Pancreas (tissue), 10 donors: ENCODE measurements at regions of chr3 and their contacts with region 1.

Region 1: DNA sequence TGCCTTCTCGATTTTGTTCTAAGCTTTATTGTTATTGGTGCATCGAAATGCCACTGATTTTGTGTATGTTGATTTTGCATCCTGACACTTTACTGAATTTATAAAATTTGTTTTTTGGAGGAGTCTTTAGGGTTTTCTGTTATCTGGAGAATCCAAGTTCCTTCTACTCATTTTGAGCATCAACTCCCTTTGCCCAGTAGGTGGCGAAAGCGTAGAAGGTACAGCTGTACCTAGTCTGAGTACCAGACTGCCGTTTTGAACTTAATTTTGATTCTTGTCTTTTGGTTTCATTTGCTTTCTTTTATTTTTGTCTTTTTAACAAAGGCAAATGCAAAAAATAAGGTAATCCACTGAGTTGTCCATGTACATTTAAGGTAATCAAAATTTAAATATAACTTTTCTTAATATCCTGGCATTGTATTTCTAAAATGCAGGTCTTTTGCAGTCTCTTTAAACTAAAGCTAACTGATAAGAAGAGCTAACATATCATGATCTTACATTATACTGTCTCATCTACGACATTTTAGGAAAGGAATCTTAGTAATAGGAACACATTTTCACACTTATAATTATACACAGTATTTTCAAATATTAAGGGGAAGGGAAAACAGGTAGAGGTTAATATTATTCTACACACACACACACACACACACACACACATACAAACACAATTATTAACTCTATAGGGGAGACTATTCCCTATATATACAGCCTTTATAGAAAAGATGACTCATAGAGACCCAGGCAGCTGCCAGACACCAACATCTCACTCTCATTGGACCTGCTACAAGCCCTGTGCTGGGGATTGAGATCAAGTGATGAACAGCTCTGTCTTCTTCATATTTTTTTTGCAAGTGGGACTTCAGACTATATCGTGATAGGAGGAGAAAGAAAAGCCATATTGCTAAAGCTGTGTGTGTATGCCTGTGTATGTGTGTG is 71.7 kb downstream of the SYNPR start:
- DNase-seq: peak in 4 of 6 donors; percentile 41 to 59 (median 49)
- ATAC-seq: peak; percentile 70 to 90 (median 84)
- H3K4me3 ChIP-seq: no peak overlapping the region
- H3K27ac ChIP-seq: no peak overlapping the region
- H3K4me1 ChIP-seq: no peaks in the 10 kb centered on the region
- H3K27me3 ChIP-seq: no peaks in the 10 kb centered on the region
- CTCF ChIP-seq: peak; percentile 42 to 70 (median 55)

Region 2: GRCh38 chr3:63092520-63092919 is 257.3 kb before region 1 on chr3:
- intact Hi-C with region 1: no loop called
- DNase-seq: no peak
- ATAC-seq: no peak
- H3K4me3 ChIP-seq: no peak overlapping the region
- H3K27ac ChIP-seq: no peak overlapping the region
- H3K4me1 ChIP-seq: no peaks in the 10 kb centered on the region
- H3K27me3 ChIP-seq: no peaks in the 10 kb centered on the region
- CTCF ChIP-seq: no peak

Region 3: DNA sequence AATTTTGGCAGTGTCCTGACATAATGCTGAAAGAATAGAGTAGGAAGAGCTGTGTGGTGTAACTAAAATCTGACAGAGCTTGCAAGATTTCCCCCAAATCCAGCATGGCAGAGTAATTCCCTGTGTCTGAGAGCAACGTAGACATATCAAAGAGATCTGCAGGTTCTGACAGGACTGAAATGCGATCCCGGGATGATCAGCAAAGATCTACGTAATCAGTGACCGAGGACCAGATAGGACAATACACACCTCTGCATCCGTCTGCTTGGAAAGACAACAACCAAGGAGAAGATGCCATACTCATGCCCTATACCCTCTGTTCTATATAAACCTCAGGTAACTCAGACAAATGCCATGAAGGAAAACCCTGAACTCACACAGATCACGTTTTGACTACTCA is 98.4 kb before region 1 on chr3:
- intact Hi-C with region 1: no loop called
- DNase-seq: no peak
- ATAC-seq: no peak
- H3K4me3 ChIP-seq: no peak overlapping the region
- H3K27ac ChIP-seq: no peak overlapping the region
- H3K4me1 ChIP-seq: no peaks in the 10 kb centered on the region
- H3K27me3 ChIP-seq: no peaks in the 10 kb centered on the region
- CTCF ChIP-seq: no peak

Region 4: DNA sequence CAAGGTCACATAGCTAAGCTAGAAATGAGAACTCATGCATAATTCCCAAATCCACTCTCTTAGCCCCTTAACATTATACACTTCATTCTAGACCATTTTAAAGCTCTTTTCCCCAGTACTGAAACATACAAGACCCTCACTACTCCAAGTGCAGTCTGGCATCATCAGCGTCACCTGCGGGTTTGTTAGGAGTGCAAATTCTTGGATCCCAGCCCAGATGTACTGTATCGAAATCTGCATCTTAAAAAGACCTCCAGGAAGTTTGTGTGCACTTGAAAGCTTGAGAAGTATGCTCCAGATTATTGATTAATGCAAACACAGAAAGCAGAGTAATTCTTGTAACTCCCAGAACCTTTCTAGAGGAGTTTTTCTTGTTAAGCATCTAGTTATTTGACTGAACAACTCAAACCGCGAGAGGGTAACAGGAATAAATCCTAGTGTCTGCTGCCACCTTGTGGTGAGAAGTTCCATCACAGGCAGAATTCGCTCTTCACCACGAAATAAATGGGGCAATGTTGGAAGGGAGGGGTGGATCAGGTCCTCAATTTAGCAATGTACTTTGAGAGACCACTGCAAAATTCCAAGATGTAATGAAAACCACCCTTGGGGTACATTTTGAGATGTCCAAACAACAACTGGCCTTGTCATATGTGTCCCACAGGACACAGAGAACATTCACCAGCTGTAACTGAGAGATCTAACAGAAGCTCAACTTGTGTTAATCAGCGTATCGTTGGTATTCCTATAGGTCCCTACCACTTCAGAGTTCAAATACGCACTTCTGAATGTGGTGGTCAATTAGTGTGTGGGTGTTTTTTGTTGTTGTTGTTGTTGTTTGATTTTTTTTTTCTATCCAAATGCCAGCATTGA is 468.7 kb after region 1 on chr3:
- intact Hi-C with region 1: loop called in 1 of 3 experiments (anchors 10 kb)
- DNase-seq: peak in 5 of 6 donors; percentile 21 to 74 (median 39)
- ATAC-seq: peak; percentile 63 to 92 (median 86)
- H3K4me3 ChIP-seq: no peak overlapping the region
- H3K27ac ChIP-seq: no peak overlapping the region
- H3K4me1 ChIP-seq: no peaks in the 10 kb centered on the region
- H3K27me3 ChIP-seq: no peaks in the 10 kb centered on the region
- CTCF ChIP-seq: peak; percentile 64 to 89 (median 74)